Esophagus muscularis mucosa (tissue), 4 donors: ENCODE measurements at regions of chr5 and their contacts with region 1.

Region 1: DNA sequence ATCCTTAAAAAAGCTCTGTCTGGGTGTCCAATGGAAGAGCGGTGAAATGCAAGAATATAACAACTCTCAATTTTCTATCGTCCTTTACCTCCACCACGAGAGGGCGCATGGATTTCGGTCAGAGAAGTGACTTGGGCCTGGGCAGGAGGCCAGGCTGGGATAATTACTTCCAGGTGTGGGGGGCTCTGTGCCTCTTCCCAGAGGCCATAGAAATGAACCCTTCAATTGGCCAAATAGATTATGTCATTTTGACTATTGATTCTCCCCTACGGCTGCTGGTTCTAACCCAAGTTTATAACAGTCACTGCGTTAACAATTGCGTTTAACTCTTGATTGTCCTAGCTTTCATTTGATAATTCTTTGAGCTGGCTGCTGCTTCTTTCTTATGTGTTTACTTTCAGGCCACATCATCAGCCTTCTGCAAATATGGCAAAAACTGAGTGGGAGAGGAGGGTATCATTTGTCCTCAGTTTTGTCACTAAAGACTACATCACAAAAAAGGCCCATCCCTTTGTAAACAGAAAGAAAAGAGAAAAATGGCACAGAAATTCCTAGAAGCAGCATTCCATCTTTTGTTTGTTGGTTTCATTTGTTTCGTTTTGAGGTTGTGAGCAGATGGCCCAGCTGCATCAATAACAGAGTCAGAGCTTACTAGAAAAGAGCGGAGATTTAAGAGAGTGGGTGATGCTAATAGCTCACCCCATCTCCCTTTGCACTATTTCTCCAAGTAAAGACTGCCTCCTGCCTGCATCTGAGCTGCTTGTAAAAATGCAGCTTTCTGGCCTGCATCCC is 45.4 kb upstream of the ZFR start:
- DNase-seq: peak; percentile 94
- H3K4me3 ChIP-seq: no peak overlapping the region
- H3K27ac ChIP-seq: no peak overlapping the region
- H3K4me1 ChIP-seq: peaks cover 0 to 9% (median 7%) of the 10 kb centered on the region in 4 donors
- H3K27me3 ChIP-seq: no peaks in the 10 kb centered on the region
- CTCF ChIP-seq: peak; percentile 73 to 80 (median 77)
- EP300 ChIP-seq: no peak
- POLR2A ChIP-seq: no peak

Region 2: DNA sequence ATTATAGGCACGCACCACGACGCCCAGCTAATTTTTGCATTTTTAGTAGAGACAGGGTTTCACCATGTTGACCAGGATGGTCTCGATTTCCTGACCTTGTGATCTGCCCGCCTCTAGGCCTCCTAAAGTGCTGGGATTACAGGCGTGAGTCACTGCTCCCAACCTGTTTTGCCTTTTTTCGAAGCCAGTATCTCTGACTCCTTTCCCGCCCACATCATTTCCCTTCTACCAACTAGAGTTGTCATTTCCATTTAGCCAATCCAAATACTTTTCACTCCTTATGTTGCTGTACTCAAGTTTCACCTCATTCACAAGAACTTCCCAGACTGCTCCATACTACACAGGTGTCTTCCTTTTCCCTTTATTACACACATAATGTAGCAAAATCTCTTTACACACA is 1799.1 kb before region 1 on chr5:
- intact Hi-C with region 1: no loop called
- DNase-seq: no peak
- H3K4me3 ChIP-seq: no peak overlapping the region
- H3K27ac ChIP-seq: no peak overlapping the region
- H3K4me1 ChIP-seq: no peaks in the 10 kb centered on the region
- H3K27me3 ChIP-seq: no peaks in the 10 kb centered on the region
- CTCF ChIP-seq: no peak
- EP300 ChIP-seq: no peak
- POLR2A ChIP-seq: no peak

Region 3: GRCh38 chr5:32585446-32586275 is 95.7 kb after region 1 on chr5 and contains the start of gene SUB1:
- intact Hi-C with region 1: loop called (anchors 1 kb)
- DNase-seq: peak; percentile 97
- H3K4me3 ChIP-seq: peak within 1 kb of the TSS; percentile 88 to 99 (median 90)
- H3K27ac ChIP-seq: peak within 1 kb of the TSS; percentile 95 to 100 (median 98)
- H3K4me1 ChIP-seq: peaks cover 14 to 42% (median 30%) of the 10 kb centered on the region in 4 donors
- H3K27me3 ChIP-seq: no peaks in the 10 kb centered on the region
- CTCF ChIP-seq: no peak
- EP300 ChIP-seq: no peak
- POLR2A ChIP-seq: peak; percentile 67
- total RNA-seq, gene SUB1: 66.4 to 154 (median 90.1) TPM

Region 4: GRCh38 chr5:32613050-32613672 is 123.2 kb after region 1 on chr5:
- intact Hi-C with region 1: loop called (anchors 2 kb)
- DNase-seq: peak; percentile 97
- H3K4me3 ChIP-seq: no peak overlapping the region
- H3K27ac ChIP-seq: no peak overlapping the region
- H3K4me1 ChIP-seq: peaks cover 6 to 21% (median 13%) of the 10 kb centered on the region in 4 donors
- H3K27me3 ChIP-seq: no peaks in the 10 kb centered on the region
- CTCF ChIP-seq: peak; percentile 90 to 94 (median 93)
- EP300 ChIP-seq: no peak
- POLR2A ChIP-seq: no peak